HCT116 (cell line): ENCODE measurements at regions of chr13 and their contacts with region 1.

Region 1: GRCh38 chr13:100244431-100244830 is 155.5 kb downstream of the PCCA start:
- DNase-seq: no peak
- ATAC-seq: no peak
- H3K4me3 ChIP-seq: no peak overlapping the region
- H3K27ac ChIP-seq: no peak overlapping the region
- H3K4me1 ChIP-seq: peaks cover 5 to 7% of the 10 kb centered on the region in 2 experiments; a peak in 2 of 4 replicates
- H3K27me3 ChIP-seq: no peaks in the 10 kb centered on the region
- CTCF ChIP-seq: no peak
- POLR2A ChIP-seq: no peak
- RAD21 ChIP-seq: no peak

Region 2: DNA sequence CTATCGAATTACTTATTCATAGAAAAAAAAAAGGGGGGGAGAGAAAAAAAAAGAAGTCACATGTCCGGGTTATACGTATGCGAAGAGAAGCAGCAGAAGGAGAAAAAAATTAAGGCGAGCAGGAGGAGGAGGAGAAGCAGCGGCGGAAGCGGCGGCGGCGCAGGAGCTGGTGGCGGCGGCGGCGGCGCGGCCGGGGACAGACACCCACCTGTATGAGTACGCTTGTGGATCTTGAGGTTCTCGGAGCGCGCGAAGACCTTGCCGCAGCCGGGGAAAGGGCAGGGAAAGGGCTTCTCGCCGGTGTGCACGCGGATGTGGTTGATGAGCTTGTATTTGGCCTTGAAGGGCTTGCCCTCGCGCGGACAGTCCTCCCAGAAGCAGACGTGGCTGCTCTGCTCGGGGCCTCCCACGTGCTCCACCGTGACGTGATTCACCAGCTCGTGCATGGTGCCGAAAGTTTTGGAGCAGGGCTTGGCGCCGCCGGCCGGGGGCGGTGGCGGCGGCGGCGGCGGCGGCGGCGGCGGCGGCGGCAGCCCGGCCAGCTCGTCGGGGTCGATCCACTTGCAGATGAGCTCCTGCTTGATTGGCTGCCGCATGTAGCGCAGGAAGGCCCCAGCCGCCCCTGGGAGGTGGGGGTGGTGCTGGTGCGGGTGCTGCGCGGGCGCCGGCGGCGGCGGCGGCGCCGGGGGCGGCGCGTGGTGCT is 274.4 kb before region 1 on chr13:
- CTCF ChIA-PET with region 1: no interaction called
- POLR2A ChIA-PET with region 1: no interaction called
- RAD21 ChIA-PET with region 1: no interaction called
- intact Hi-C with region 1: loop called (anchors 5 kb)
- DNase-seq: peak; percentile 66
- ATAC-seq: peak; percentile 78
- H3K4me3 ChIP-seq: peak overlapping the region; percentile 79 to 82
- H3K27ac ChIP-seq: peak overlapping the region; percentile 97
- H3K4me1 ChIP-seq: peaks cover 10 to 33% of the 10 kb centered on the region in 2 experiments
- H3K27me3 ChIP-seq: no peaks in the 10 kb centered on the region
- CTCF ChIP-seq: no peak
- POLR2A ChIP-seq: peak; percentile 12
- RAD21 ChIP-seq: no peak

Region 3: GRCh38 chr13:100229603-100230002 is 14.8 kb before region 1 on chr13:
- CTCF ChIA-PET with region 1: no interaction called
- POLR2A ChIA-PET with region 1: no interaction called
- RAD21 ChIA-PET with region 1: no interaction called
- intact Hi-C with region 1: no loop called
- DNase-seq: no peak
- ATAC-seq: no peak
- H3K4me3 ChIP-seq: no peak overlapping the region
- H3K27ac ChIP-seq: no peak overlapping the region
- H3K4me1 ChIP-seq: peaks cover 13 to 19% of the 10 kb centered on the region in 2 experiments
- H3K27me3 ChIP-seq: no peaks in the 10 kb centered on the region
- CTCF ChIP-seq: no peak
- POLR2A ChIP-seq: no peak
- RAD21 ChIP-seq: no peak

Region 4: GRCh38 chr13:100315522-100315921 is 71.1 kb after region 1 on chr13:
- CTCF ChIA-PET with region 1: no interaction called
- POLR2A ChIA-PET with region 1: no interaction called
- RAD21 ChIA-PET with region 1: no interaction called
- intact Hi-C with region 1: no loop called
- DNase-seq: no peak
- ATAC-seq: no peak; the same call in 1 of the 2 replicates
- H3K4me3 ChIP-seq: no peak overlapping the region
- H3K27ac ChIP-seq: no peak overlapping the region
- H3K4me1 ChIP-seq: peaks cover 16 to 18% of the 10 kb centered on the region in 2 experiments
- H3K27me3 ChIP-seq: no peaks in the 10 kb centered on the region
- CTCF ChIP-seq: no peak
- POLR2A ChIP-seq: no peak
- RAD21 ChIP-seq: no peak

Region 5: DNA sequence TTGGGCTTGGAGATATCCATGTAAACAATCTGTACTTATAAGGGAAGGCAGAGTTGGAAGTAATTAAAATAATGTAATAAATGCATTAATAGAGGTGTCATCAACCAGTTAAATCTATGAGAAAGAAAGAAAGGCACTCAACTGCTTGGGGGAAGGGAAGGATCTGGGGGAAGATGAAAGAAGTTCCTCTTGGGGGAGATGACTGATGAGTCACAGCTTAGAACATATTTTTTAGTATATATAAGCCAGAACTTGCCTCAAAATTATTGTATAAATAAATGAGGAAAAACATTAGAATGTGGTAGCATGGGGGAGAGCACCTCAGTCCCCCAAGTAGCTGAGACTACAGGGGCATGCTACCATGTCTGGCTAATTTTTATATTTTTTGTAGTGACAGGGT is 138.4 kb after region 1 on chr13:
- CTCF ChIA-PET with region 1: no interaction called
- POLR2A ChIA-PET with region 1: no interaction called
- RAD21 ChIA-PET with region 1: no interaction called
- intact Hi-C with region 1: loop called (anchors 10 kb)
- DNase-seq: no peak
- ATAC-seq: no peak
- H3K4me3 ChIP-seq: no peak overlapping the region
- H3K27ac ChIP-seq: peak overlapping the region; percentile 48
- H3K4me1 ChIP-seq: peaks cover 20 to 39% of the 10 kb centered on the region in 2 experiments
- H3K27me3 ChIP-seq: no peaks in the 10 kb centered on the region
- CTCF ChIP-seq: no peak
- POLR2A ChIP-seq: no peak
- RAD21 ChIP-seq: no peak

Region 6: GRCh38 chr13:100461309-100462030 is 217.0 kb after region 1 on chr13:
- CTCF ChIA-PET with region 1: no interaction called
- POLR2A ChIA-PET with region 1: no interaction called
- RAD21 ChIA-PET with region 1: no interaction called
- intact Hi-C with region 1: no loop called
- DNase-seq: no peak
- ATAC-seq: no peak
- H3K4me3 ChIP-seq: no peak overlapping the region
- H3K27ac ChIP-seq: no peak overlapping the region
- H3K4me1 ChIP-seq: peaks cover 3 to 8% of the 10 kb centered on the region in 2 experiments; a peak in 2 of 4 replicates
- H3K27me3 ChIP-seq: no peaks in the 10 kb centered on the region
- CTCF ChIP-seq: no peak
- POLR2A ChIP-seq: no peak
- RAD21 ChIP-seq: no peak

Region 7: DNA sequence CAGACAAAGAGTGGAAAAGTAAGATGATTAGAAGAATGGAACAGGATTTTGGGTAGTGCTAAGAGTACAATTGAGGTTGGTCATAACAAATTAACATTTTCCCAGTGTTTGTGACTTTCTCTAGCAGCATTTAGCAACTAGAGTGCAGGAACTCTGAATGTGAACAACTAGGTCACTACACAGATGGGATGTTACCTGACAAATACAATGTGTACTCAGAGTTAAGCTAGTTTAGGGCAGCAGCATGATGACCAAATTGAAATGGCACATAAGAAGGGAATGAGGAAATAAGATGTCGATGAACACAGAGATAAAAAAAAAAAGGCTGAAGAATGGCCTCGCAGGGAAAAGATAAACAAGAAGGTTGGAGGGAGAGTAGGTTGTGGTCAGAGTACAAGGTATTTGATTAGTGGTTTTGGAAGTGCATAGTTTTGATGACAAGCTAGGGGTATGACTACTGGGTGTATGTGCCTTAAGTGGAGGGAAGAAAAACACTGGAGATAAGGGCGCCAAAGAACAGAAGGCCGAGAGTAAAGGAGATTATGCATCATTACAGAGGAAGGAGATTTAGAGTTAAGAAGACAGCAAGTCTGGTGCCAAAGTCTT is 1776.3 kb after region 1 on chr13:
- CTCF ChIA-PET with region 1: no interaction called
- POLR2A ChIA-PET with region 1: no interaction called
- RAD21 ChIA-PET with region 1: no interaction called
- intact Hi-C with region 1: no loop called
- DNase-seq: no peak
- ATAC-seq: no peak
- H3K4me3 ChIP-seq: no peak overlapping the region
- H3K27ac ChIP-seq: no peak overlapping the region
- H3K4me1 ChIP-seq: no peaks in the 10 kb centered on the region
- H3K27me3 ChIP-seq: no peaks in the 10 kb centered on the region
- CTCF ChIP-seq: no peak
- POLR2A ChIP-seq: no peak
- RAD21 ChIP-seq: no peak